T-cell (primary cell): ENCODE measurements at regions of chr19 and their contacts with region 1.

Region 1: GRCh38 chr19:40425450-40426287 is at the start of gene SERTAD1:
- DNase-seq: peak; percentile 99 to 100 (median 100)
- ATAC-seq: peak; percentile 82 to 92 (median 88)
- H3K4me3 ChIP-seq: peak within 1 kb of the TSS; percentile 90 to 99
- H3K4me3 Mint-ChIP-seq: peak within 1 kb of the TSS; percentile 85 to 98 (median 94)
- H3K27ac ChIP-seq: peak within 1 kb of the TSS; percentile 89
- H3K27ac Mint-ChIP-seq: peak within 1 kb of the TSS; percentile 97 to 99
- H3K4me1 ChIP-seq: peaks cover 12 to 39% of the 10 kb centered on the region in 2 experiments
- H3K4me1 Mint-ChIP-seq: peaks cover 26 to 32% (median 32%) of the 10 kb centered on the region in 3 donors
- H3K27me3 ChIP-seq: no peaks in the 10 kb centered on the region
- H3K27me3 Mint-ChIP-seq: no peaks in the 10 kb centered on the region
- total RNA-seq, gene SERTAD1: 10.9 to 25.4 (median 13.3) TPM

Region 2: DNA sequence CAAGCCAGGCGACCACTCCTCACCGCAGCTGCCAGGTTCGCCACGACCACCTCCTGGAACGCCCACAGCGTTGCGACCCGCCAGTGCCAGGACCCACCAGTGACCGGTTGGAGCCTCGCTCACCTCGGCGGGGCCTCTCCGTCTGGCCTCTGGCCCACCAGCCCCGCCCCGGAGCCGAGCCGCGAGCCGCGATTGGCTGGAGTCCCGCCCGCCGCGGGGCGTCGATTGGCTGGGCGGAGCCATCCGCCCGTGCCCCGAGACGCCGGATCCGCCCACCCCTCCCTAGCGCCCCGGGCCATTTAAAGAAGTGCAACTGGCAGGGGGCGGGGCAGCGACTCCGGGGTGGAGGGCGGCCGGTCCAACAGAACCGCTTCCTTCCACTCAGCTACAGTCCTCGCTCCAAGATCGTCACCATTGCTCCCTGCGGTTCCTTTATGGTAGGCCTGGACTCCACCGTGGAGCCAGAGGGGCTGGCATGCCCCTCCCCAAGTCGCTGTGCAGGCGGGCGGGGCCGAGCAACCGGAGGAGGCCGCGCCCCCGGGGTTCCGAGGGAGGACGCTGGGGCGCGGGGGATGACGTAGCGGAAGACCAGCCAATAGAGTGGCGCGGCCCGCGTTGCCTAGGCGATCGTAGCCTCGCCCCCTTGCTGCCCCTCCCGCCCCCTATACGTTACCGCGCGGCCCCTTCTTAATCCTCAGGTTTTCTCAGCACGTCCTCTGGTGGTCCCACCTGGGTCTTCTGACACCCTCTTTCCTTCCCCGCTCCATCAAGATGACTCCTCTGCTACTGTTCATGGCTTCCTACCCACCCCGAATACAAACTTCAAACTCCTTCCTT is 18.7 kb after region 1 on chr19 and contains the start of gene SERTAD3:
- CTCF ChIA-PET with region 1: interaction called in 1 of 2 experiments, 12 read pairs
- POLR2A ChIA-PET with region 1: interaction called, 6 to 10 read pairs
- DNase-seq: peak; percentile 92 to 98 (median 96)
- ATAC-seq: peak; percentile 73 to 80 (median 76)
- H3K4me3 ChIP-seq: peak within 1 kb of the TSS; percentile 91 to 100
- H3K4me3 Mint-ChIP-seq: peak within 1 kb of the TSS; percentile 98 to 100 (median 100)
- H3K27ac ChIP-seq: peak within 1 kb of the TSS; percentile 77
- H3K27ac Mint-ChIP-seq: peak within 1 kb of the TSS; percentile 97 to 99
- H3K4me1 ChIP-seq: peaks cover 6 to 18% of the 10 kb centered on the region in 2 experiments
- H3K4me1 Mint-ChIP-seq: peaks cover 18 to 19% (median 18%) of the 10 kb centered on the region in 3 donors
- H3K27me3 ChIP-seq: no peaks in the 10 kb centered on the region
- H3K27me3 Mint-ChIP-seq: no peaks in the 10 kb centered on the region
- total RNA-seq, gene SERTAD3: 17.4 to 26.7 (median 24.7) TPM

Region 3: GRCh38 chr19:40465557-40466150 is 40.0 kb after region 1 on chr19 and contains the start of gene BLVRB:
- CTCF ChIA-PET with region 1: interaction called, 5 to 18 read pairs
- POLR2A ChIA-PET with region 1: interaction called in 1 of 2 experiments, 3 read pairs
- DNase-seq: peak; percentile 97 to 100 (median 99)
- ATAC-seq: peak; percentile 85 to 94 (median 92)
- H3K4me3 ChIP-seq: peak within 1 kb of the TSS; percentile 62 to 73
- H3K4me3 Mint-ChIP-seq: peak within 1 kb of the TSS; percentile 76 to 92 (median 83)
- H3K27ac ChIP-seq: peak within 1 kb of the TSS; percentile 81
- H3K27ac Mint-ChIP-seq: peak within 1 kb of the TSS; percentile 68 to 69
- H3K4me1 ChIP-seq: peaks cover 11 to 32% of the 10 kb centered on the region in 2 experiments
- H3K4me1 Mint-ChIP-seq: peaks cover 24 to 34% (median 24%) of the 10 kb centered on the region in 3 donors
- H3K27me3 ChIP-seq: peaks cover 3 to 24% of the 10 kb centered on the region in 2 experiments
- H3K27me3 Mint-ChIP-seq: peaks cover 5 to 18% of the 10 kb centered on the region in 2 donors
- total RNA-seq, gene BLVRB: 6.8 to 20.3 (median 16.4) TPM

Region 4: DNA sequence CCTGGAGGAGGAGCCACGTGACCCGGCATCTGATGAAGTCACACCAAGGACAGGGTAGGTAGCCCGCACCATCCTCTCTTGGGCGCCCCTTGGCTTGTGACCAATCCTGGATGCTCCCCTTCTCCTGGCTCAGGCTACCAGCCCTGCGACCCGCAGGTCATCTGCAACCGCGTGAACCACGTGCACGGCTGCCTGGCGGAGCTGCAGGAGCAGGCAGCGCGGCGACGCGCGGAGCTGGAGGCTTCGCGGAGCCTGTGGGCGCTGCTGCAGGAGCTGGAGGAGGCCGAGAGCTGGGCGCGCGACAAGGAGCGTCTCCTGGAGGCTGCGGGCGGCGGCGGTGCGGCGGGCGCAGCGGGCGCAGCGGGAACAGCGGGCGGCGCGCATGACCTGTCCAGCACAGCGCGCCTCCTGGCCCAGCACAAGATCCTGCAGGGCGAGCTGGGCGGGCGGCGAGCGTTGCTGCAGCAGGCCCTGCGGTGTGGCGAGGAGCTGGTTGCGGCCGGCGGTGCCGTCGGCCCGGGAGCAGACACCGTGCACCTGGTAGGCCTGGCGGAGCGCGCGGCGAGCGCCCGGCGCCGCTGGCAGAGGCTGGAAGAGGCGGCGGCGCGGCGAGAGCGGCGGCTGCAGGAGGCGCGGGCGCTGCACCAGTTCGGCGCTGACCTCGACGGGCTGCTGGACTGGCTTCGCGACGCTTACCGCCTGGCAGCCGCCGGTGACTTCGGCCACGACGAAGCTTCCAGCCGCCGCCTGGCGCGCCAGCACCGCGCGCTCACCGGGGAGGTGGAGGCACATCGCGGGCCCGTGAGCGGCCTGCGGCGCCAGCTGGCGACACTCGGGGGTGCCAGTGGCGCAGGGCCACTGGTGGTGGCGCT is 87.0 kb after region 1 on chr19:
- CTCF ChIA-PET with region 1: no interaction called
- POLR2A ChIA-PET with region 1: no interaction called
- DNase-seq: no peak
- ATAC-seq: peak in 2 of 4 experiments; percentile 23 to 24
- H3K4me3 ChIP-seq: no peak overlapping the region
- H3K4me3 Mint-ChIP-seq: peak overlapping the region in 1 of 3 donors; percentile 62
- H3K27ac ChIP-seq: no peak overlapping the region
- H3K27ac Mint-ChIP-seq: no peak overlapping the region
- H3K4me1 ChIP-seq: peaks cover 0 to 5% of the 10 kb centered on the region in 2 experiments
- H3K4me1 Mint-ChIP-seq: peaks cover 4 to 6% (median 6%) of the 10 kb centered on the region in 3 donors
- H3K27me3 ChIP-seq: peaks cover 14 to 63% of the 10 kb centered on the region in 2 experiments
- H3K27me3 Mint-ChIP-seq: peaks cover 46 to 52% of the 10 kb centered on the region in 2 donors